GM12878 (cell line): ENCODE measurements at regions of chr5 and their contacts with region 1.

Region 1: GRCh38 chr5:158695595-158696330 is 404.0 kb downstream of the EBF1 start:
- DNase-seq: peak; percentile 85
- ATAC-seq: peak; percentile 94
- H3K4me3 ChIP-seq: no peak overlapping the region
- H3K27ac ChIP-seq: no peak overlapping the region
- H3K4me1 ChIP-seq: no peaks in the 10 kb centered on the region
- H3K27me3 ChIP-seq: no peaks in the 10 kb centered on the region
- CTCF ChIP-seq: peak; percentile 88 to 97 (median 88)
- EP300 ChIP-seq: peak; percentile 41 to 66; a peak in 2 of 4 replicates
- POLR2A ChIP-seq: no peak
- RAD21 ChIP-seq: peak; percentile 88

Region 2: GRCh38 chr5:157558041-157558595 is 1137.6 kb before region 1 on chr5:
- CTCF ChIA-PET with region 1: no interaction called
- POLR2A ChIA-PET with region 1: no interaction called
- RAD21 ChIA-PET with region 1: no interaction called
- SMC1A ChIA-PET with region 1: no interaction called
- in situ Hi-C with region 1: no loop called
- intact Hi-C with region 1: no loop called
- DNase-seq: no peak
- ATAC-seq: no peak
- H3K4me3 ChIP-seq: no peak overlapping the region
- H3K27ac ChIP-seq: no peak overlapping the region
- H3K4me1 ChIP-seq: peaks cover 24% of the 10 kb centered on the region
- H3K27me3 ChIP-seq: no peaks in the 10 kb centered on the region
- CTCF ChIP-seq: no peak
- EP300 ChIP-seq: no peak
- POLR2A ChIP-seq: no peak
- RAD21 ChIP-seq: no peak

Region 3: GRCh38 chr5:158026304-158027031 is 669.3 kb before region 1 on chr5:
- CTCF ChIA-PET with region 1: no interaction called
- POLR2A ChIA-PET with region 1: no interaction called
- RAD21 ChIA-PET with region 1: no interaction called
- SMC1A ChIA-PET with region 1: no interaction called
- in situ Hi-C with region 1: no loop called
- intact Hi-C with region 1: no loop called
- DNase-seq: no peak
- ATAC-seq: no peak
- H3K4me3 ChIP-seq: no peak overlapping the region
- H3K27ac ChIP-seq: no peak overlapping the region
- H3K4me1 ChIP-seq: no peaks in the 10 kb centered on the region
- H3K27me3 ChIP-seq: peaks cover 0 to 2% of the 10 kb centered on the region in 2 experiments; a peak in 2 of 4 replicates
- CTCF ChIP-seq: no peak
- EP300 ChIP-seq: no peak
- POLR2A ChIP-seq: no peak
- RAD21 ChIP-seq: no peak

Region 4: GRCh38 chr5:158174918-158175851 is 520.6 kb before region 1 on chr5:
- CTCF ChIA-PET with region 1: interaction called, 38 read pairs
- POLR2A ChIA-PET with region 1: no interaction called
- RAD21 ChIA-PET with region 1: interaction called, 20 read pairs
- SMC1A ChIA-PET with region 1: interaction called, 25 read pairs
- in situ Hi-C with region 1: no loop called
- intact Hi-C with region 1: loop called (anchors 2 kb)
- DNase-seq: peak; percentile 27
- ATAC-seq: peak; percentile 97
- H3K4me3 ChIP-seq: no peak overlapping the region
- H3K27ac ChIP-seq: no peak overlapping the region
- H3K4me1 ChIP-seq: no peaks in the 10 kb centered on the region
- H3K27me3 ChIP-seq: peaks cover 0 to 1% of the 10 kb centered on the region in 2 experiments; a peak in 1 of 4 replicates
- CTCF ChIP-seq: peak; percentile 81 to 87 (median 84)
- EP300 ChIP-seq: no peak
- POLR2A ChIP-seq: no peak
- RAD21 ChIP-seq: peak; percentile 99

Region 5: GRCh38 chr5:158716668-158717067 is 20.9 kb after region 1 on chr5:
- CTCF ChIA-PET with region 1: interaction called, 11 read pairs
- POLR2A ChIA-PET with region 1: no interaction called
- RAD21 ChIA-PET with region 1: no interaction called
- SMC1A ChIA-PET with region 1: interaction called, 13 read pairs
- in situ Hi-C with region 1: no loop called
- intact Hi-C with region 1: no loop called
- DNase-seq: no peak
- ATAC-seq: no peak
- H3K4me3 ChIP-seq: no peak overlapping the region
- H3K27ac ChIP-seq: no peak overlapping the region
- H3K4me1 ChIP-seq: no peaks in the 10 kb centered on the region
- H3K27me3 ChIP-seq: no peaks in the 10 kb centered on the region
- CTCF ChIP-seq: no peak
- EP300 ChIP-seq: no peak
- POLR2A ChIP-seq: no peak
- RAD21 ChIP-seq: no peak

Region 6: GRCh38 chr5:158875272-158875679 is 179.5 kb after region 1 on chr5:
- CTCF ChIA-PET with region 1: interaction called, 19 read pairs
- POLR2A ChIA-PET with region 1: interaction called, 4 read pairs
- RAD21 ChIA-PET with region 1: interaction called, 62 read pairs
- SMC1A ChIA-PET with region 1: interaction called, 31 read pairs
- in situ Hi-C with region 1: no loop called
- intact Hi-C with region 1: no loop called
- DNase-seq: no peak
- ATAC-seq: peak; percentile 54
- H3K4me3 ChIP-seq: no peak overlapping the region
- H3K27ac ChIP-seq: peak overlapping the region; percentile 71
- H3K4me1 ChIP-seq: peaks cover 55% of the 10 kb centered on the region
- H3K27me3 ChIP-seq: no peaks in the 10 kb centered on the region
- CTCF ChIP-seq: no peak
- EP300 ChIP-seq: peak; percentile 60 to 64; a peak in 2 of 4 replicates
- POLR2A ChIP-seq: no peak
- RAD21 ChIP-seq: no peak

Region 7: GRCh38 chr5:158921441-158922262 is 225.9 kb after region 1 on chr5:
- CTCF ChIA-PET with region 1: interaction called, 4 read pairs
- POLR2A ChIA-PET with region 1: no interaction called
- RAD21 ChIA-PET with region 1: interaction called, 14 read pairs
- SMC1A ChIA-PET with region 1: interaction called, 5 read pairs
- in situ Hi-C with region 1: no loop called
- intact Hi-C with region 1: no loop called
- DNase-seq: peak; percentile 75
- ATAC-seq: peak; percentile 70
- H3K4me3 ChIP-seq: no peak overlapping the region
- H3K27ac ChIP-seq: peak overlapping the region; percentile 45
- H3K4me1 ChIP-seq: peaks cover 3% of the 10 kb centered on the region
- H3K27me3 ChIP-seq: no peaks in the 10 kb centered on the region
- CTCF ChIP-seq: no peak
- EP300 ChIP-seq: peak; percentile 91 to 98
- POLR2A ChIP-seq: no peak
- RAD21 ChIP-seq: no peak

Region 8: DNA sequence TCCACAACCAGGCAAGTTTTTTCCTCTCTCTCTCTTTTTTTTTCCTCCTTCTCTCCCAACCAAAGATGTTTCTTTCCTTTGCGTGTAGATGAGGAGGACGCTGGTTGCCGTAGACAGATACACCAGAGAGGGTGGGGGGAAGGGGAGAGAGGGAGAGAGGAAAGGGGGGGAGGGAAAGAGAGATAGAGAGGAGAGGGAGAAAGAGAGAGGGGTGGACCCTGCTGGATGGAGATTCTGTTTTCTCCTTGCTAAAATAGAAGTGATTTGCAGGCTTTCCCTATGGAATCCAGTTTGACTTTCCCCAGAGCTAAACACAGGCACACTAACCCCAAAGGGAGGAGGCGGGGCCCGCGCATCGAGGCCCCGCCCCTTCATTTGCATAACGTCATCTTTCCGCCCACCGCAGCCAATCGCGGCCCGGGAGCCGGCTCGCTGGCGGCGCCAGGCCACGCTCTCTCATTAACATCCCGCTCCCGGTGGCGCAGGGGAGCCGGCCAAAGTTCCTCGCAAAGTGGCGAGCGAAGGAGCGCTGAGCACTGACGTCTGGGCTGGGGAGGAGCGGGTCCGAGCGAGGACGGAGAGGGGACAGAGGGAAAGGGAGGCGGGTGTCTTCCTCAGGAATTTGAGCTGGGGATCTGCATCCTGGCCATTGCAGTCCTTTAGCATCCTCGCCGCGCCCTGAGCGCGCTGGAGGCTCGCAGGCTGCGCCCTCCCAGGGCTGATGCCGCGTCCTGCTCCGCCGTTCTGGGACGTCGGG is 404.4 kb after region 1 on chr5:
- CTCF ChIA-PET with region 1: interaction called, 195 read pairs
- POLR2A ChIA-PET with region 1: interaction called, 17 read pairs
- RAD21 ChIA-PET with region 1: interaction called, 210 read pairs
- SMC1A ChIA-PET with region 1: interaction called, 224 read pairs
- in situ Hi-C with region 1: loop called (anchors 5 kb)
- intact Hi-C with region 1: no loop called
- DNase-seq: peak; percentile 81
- ATAC-seq: peak; percentile 58
- H3K4me3 ChIP-seq: peak overlapping the region; percentile 67
- H3K27ac ChIP-seq: peak overlapping the region; percentile 67
- H3K4me1 ChIP-seq: peaks cover 5% of the 10 kb centered on the region
- H3K27me3 ChIP-seq: no peaks in the 10 kb centered on the region
- CTCF ChIP-seq: no peak
- EP300 ChIP-seq: peak in 1 of 2 experiments; percentile 1; a peak in 2 of 4 replicates
- POLR2A ChIP-seq: peak; percentile 93
- RAD21 ChIP-seq: no peak